Activated T-helper 1 cell treated with anti-CD3 and anti-CD28 coated beads, Interleukin-12 subunit alpha, Interleukin-12 subunit beta, Interleukin-2, Interleukin-4 antibody, amounts not matched to agents 30 ng/mL and 10 ng/mL and 1 ng/mL, durations not matched to agents 14 hours and 24 hours and 36 hours (primary cell): ENCODE measurements at regions of chr20 and their contacts with region 1.

Region 1: GRCh38 chr20:25160467-25160866 is 35.0 kb upstream of the ENTPD6 start:
- DNase-seq: no peak
- H3K4me3 Mint-ChIP-seq: no peak overlapping the region
- H3K27ac Mint-ChIP-seq: no peak overlapping the region
- H3K4me1 Mint-ChIP-seq: peaks cover 8% of the 10 kb centered on the region
- H3K27me3 Mint-ChIP-seq: peaks cover 7% of the 10 kb centered on the region

Region 2: GRCh38 chr20:25148181-25148981 is 12.1 kb before region 1 on chr20:
- intact Hi-C with region 1: loop called (anchors 1 kb)
- DNase-seq: peak; percentile 12
- H3K4me3 Mint-ChIP-seq: peak overlapping the region; percentile 81
- H3K27ac Mint-ChIP-seq: peak overlapping the region; percentile 78
- H3K4me1 Mint-ChIP-seq: no peaks in the 10 kb centered on the region
- H3K27me3 Mint-ChIP-seq: peaks cover 30% of the 10 kb centered on the region

Region 3: GRCh38 chr20:25204550-25205276 is 44.2 kb after region 1 on chr20:
- intact Hi-C with region 1: no loop called
- DNase-seq: no peak
- H3K4me3 Mint-ChIP-seq: no peak overlapping the region
- H3K27ac Mint-ChIP-seq: no peak overlapping the region
- H3K4me1 Mint-ChIP-seq: no peaks in the 10 kb centered on the region
- H3K27me3 Mint-ChIP-seq: no peaks in the 10 kb centered on the region